Right ventricle myocardium inferior (tissue), 1 donor: ENCODE measurements at regions of chr6 and their contacts with region 1.

Region 1: GRCh38 chr6:46993846-46994245 is 48.3 kb downstream of the ADGRF1 start:
- DNase-seq: no peak
- ATAC-seq: no peak

Region 2: GRCh38 chr6:46848684-46849360 is 145.0 kb before region 1 on chr6:
- intact Hi-C with region 1: loop called (anchors 2 kb)
- DNase-seq: peak; percentile 93
- ATAC-seq: peak; percentile 93